H1 (cell line): ENCODE measurements at regions of chr4 and their contacts with region 1.

Region 1: GRCh38 chr4:56129431-56129861 is 180.7 kb downstream of the CEP135 start:
- DNase-seq: peak in 1 of 2 experiments; percentile 72
- H3K4me3 ChIP-seq: no peak overlapping the region
- H3K27ac ChIP-seq: no peak overlapping the region
- H3K4me1 ChIP-seq: peaks cover 0 to 6% (median 3%) of the 10 kb centered on the region in 4 experiments; a peak in 3 of 7 replicates
- H3K27me3 ChIP-seq: no peaks in the 10 kb centered on the region
- CTCF ChIP-seq: peak; percentile 65 to 91 (median 85)
- EP300 ChIP-seq: no peak
- POLR2A ChIP-seq: no peak
- RAD21 ChIP-seq: peak; percentile 73 to 77

Region 2: GRCh38 chr4:55330241-55330640 is 799.2 kb before region 1 on chr4:
- CTCF ChIA-PET with region 1: no interaction called
- POLR2A ChIA-PET with region 1: no interaction called
- DNase-seq: no peak
- H3K4me3 ChIP-seq: no peak overlapping the region
- H3K27ac ChIP-seq: no peak overlapping the region
- H3K4me1 ChIP-seq: no peaks in the 10 kb centered on the region
- H3K27me3 ChIP-seq: no peaks in the 10 kb centered on the region
- CTCF ChIP-seq: no peak
- EP300 ChIP-seq: no peak
- POLR2A ChIP-seq: no peak
- RAD21 ChIP-seq: no peak

Region 3: GRCh38 chr4:55939421-55939820 is 190.0 kb before region 1 on chr4:
- CTCF ChIA-PET with region 1: no interaction called
- POLR2A ChIA-PET with region 1: no interaction called
- DNase-seq: no peak
- H3K4me3 ChIP-seq: no peak overlapping the region
- H3K27ac ChIP-seq: no peak overlapping the region
- H3K4me1 ChIP-seq: peaks cover 0 to 9% (median 0%) of the 10 kb centered on the region in 4 experiments; a peak in 2 of 7 replicates
- H3K27me3 ChIP-seq: no peaks in the 10 kb centered on the region
- CTCF ChIP-seq: no peak
- EP300 ChIP-seq: no peak
- POLR2A ChIP-seq: no peak
- RAD21 ChIP-seq: no peak

Region 4: GRCh38 chr4:56301181-56302076 is 172.0 kb after region 1 on chr4:
- CTCF ChIA-PET with region 1: interaction called, 20 read pairs
- POLR2A ChIA-PET with region 1: no interaction called
- DNase-seq: peak; percentile 36 to 76
- H3K4me3 ChIP-seq: no peak overlapping the region
- H3K27ac ChIP-seq: no peak overlapping the region
- H3K4me1 ChIP-seq: peaks cover 0 to 5% (median under 1%) of the 10 kb centered on the region in 4 experiments; a peak in 2 of 7 replicates
- H3K27me3 ChIP-seq: no peaks in the 10 kb centered on the region
- CTCF ChIP-seq: peak; percentile 88 to 95 (median 89)
- EP300 ChIP-seq: no peak
- POLR2A ChIP-seq: no peak
- RAD21 ChIP-seq: peak; percentile 98 to 99

Region 5: GRCh38 chr4:56360071-56360470 is 230.6 kb after region 1 on chr4:
- CTCF ChIA-PET with region 1: no interaction called
- POLR2A ChIA-PET with region 1: no interaction called
- DNase-seq: no peak
- H3K4me3 ChIP-seq: no peak overlapping the region
- H3K27ac ChIP-seq: no peak overlapping the region
- H3K4me1 ChIP-seq: no peaks in the 10 kb centered on the region
- H3K27me3 ChIP-seq: no peaks in the 10 kb centered on the region
- CTCF ChIP-seq: no peak
- EP300 ChIP-seq: no peak
- POLR2A ChIP-seq: no peak
- RAD21 ChIP-seq: no peak